Calu3 (cell line): ENCODE measurements at regions of chr2 and their contacts with region 1.

Region 1: GRCh38 chr2:217988014-217988839 is 14.6 kb downstream of the TNS1 start:
- DNase-seq: peak; percentile 94
- H3K4me3 Mint-ChIP-seq: peak overlapping the region; percentile 51
- H3K27ac Mint-ChIP-seq: peak overlapping the region; percentile 63
- H3K4me1 Mint-ChIP-seq: peaks cover 29% of the 10 kb centered on the region
- H3K27me3 Mint-ChIP-seq: peaks cover 19% of the 10 kb centered on the region
- CTCF ChIP-seq: peak; percentile 81

Region 2: GRCh38 chr2:217622205-217623060 is 365.8 kb before region 1 on chr2:
- CTCF ChIA-PET with region 1: no interaction called
- intact Hi-C with region 1: no loop called
- DNase-seq: no peak
- H3K4me3 Mint-ChIP-seq: no peak overlapping the region
- H3K27ac Mint-ChIP-seq: no peak overlapping the region
- H3K4me1 Mint-ChIP-seq: no peaks in the 10 kb centered on the region
- H3K27me3 Mint-ChIP-seq: no peaks in the 10 kb centered on the region
- CTCF ChIP-seq: no peak

Region 3: DNA sequence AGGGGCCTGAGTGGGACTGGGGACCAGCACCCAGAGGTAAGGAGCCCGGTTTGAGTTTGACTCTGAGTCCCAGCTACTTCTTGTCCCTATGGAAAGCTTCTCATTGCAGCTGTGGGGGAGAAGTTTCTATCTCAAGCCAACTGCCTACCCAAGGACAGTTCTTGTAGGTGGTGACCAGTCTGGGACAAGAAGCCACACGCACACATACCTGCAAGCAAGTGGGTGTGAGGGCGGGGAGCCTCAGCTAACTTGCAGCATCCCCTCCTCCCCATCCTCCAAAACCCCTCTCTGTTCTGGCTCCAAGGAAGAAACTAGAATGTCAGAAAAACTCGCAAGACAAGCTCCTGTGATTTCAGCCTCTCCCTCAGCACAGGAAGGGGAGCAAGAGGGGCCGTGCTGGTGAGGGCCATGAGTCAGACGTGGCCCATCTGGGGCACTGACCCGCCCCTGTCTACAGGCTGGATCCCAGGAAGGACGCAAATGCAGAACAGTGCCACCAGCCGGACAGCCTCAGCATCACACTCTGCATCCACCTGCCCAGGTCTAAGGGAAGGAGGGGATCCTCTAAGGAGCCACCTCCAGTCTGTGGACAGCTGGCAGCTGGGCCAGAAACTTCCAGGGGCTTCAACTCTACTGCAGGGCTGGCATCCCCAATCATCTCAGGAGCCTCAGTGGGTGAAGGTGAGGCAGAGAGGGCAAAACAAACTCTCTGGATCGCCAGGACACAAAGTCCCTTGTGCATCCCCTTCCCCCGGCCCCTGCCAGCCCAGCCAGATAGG is 88.8 kb before region 1 on chr2:
- CTCF ChIA-PET with region 1: no interaction called
- intact Hi-C with region 1: loop called (anchors 5 kb)
- DNase-seq: peak; percentile 77
- H3K4me3 Mint-ChIP-seq: no peak overlapping the region
- H3K27ac Mint-ChIP-seq: no peak overlapping the region
- H3K4me1 Mint-ChIP-seq: no peaks in the 10 kb centered on the region
- H3K27me3 Mint-ChIP-seq: peaks cover 68% of the 10 kb centered on the region
- CTCF ChIP-seq: peak; percentile 82

Region 4: DNA sequence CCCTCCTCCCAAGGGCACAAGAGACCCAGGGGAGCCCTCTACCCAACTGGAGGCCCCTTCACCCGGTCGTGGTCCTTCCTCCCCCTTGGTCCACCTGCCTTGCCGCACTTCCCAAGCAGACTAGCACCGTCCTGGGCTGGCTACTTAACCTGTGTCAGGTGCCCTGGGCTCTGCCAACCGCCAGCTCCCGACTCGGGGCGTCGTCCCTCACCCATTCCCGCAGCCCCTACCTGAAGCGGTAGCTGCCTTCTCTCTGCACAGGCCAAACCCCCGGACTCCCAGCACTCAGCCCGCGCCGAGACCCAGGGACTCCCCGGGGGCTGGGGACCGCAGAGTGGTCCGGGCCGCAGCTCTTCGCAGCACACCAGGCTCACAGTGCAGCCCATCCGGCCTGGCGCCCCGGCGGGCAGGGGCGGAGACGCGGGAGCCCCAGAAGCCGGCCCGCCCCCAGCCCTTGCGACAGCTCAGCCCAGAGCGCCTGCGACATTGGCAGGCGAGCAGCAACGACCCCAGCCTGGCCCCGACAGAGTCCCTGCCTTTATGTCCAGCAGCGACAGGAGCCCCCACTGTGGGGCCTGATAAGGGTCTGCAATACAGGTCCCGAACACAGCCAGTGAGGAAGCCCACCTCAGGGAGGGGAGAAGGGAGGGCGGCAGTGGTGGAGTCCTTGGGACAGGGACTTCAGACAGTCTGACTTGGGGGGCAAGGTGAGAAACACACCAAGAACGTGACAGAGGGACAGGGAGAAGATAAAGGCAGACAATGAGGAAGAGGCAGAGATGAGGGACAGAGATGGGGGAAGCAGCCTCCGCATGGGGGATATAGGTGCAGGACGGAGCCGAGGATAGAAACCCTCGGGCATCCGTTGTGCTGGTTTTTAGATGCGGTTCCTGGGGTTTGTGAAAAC is 45.6 kb after region 1 on chr2:
- CTCF ChIA-PET with region 1: no interaction called
- intact Hi-C with region 1: loop called (anchors 5 kb)
- DNase-seq: no peak
- H3K4me3 Mint-ChIP-seq: no peak overlapping the region
- H3K27ac Mint-ChIP-seq: no peak overlapping the region
- H3K4me1 Mint-ChIP-seq: no peaks in the 10 kb centered on the region
- H3K27me3 Mint-ChIP-seq: peaks cover 28% of the 10 kb centered on the region
- CTCF ChIP-seq: no peak

Region 5: GRCh38 chr2:218046238-218046637 is 58.0 kb after region 1 on chr2:
- CTCF ChIA-PET with region 1: no interaction called
- intact Hi-C with region 1: no loop called
- DNase-seq: no peak
- H3K4me3 Mint-ChIP-seq: no peak overlapping the region
- H3K27ac Mint-ChIP-seq: no peak overlapping the region
- H3K4me1 Mint-ChIP-seq: no peaks in the 10 kb centered on the region
- H3K27me3 Mint-ChIP-seq: peaks cover 72% of the 10 kb centered on the region
- CTCF ChIP-seq: no peak